ENCODE measurements at regions of chr9 and their contacts with region 1.

Region 1: DNA sequence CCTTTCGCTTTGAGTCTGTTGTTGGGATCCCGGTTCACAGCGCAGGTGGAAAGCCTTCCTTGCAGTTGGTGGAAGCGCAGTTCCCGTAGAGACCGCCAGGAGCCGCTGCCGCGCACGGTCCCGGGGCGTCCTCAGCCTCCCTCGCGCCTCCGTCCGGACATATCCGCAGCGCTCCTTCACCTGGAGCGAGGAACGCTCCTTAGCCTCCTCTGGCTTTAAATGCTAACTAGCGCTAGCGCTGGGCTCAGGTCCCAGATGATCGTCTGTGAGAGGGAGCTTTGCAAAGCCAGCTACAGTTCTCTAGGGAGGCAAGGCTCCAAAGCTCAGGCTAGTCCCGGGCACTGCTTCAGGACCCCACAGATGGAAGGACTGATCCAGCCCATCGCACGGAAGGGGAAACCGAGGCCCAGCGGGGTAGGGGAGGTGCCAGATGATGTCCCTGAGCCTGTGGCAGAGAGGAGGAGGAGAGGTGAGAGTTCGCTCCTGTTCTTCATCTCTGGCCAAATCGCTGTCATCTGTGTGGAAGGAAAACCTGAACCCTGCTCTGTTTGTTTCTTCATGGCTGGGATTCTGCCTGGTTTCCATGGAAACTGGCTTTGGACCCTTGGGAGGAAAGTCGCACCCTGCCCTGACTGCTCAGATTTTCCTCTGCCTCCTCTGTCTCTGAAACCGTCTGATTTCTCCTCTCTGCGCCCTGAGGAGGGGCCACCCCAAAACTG is 31.4 kb downstream of the COL15A1 start:
- DNase-seq: peak; percentile 86
- H3K4me3 Mint-ChIP-seq: no peak overlapping the region
- H3K27ac Mint-ChIP-seq: no peak overlapping the region
- H3K4me1 Mint-ChIP-seq: peaks cover 13% of the 10 kb centered on the region
- H3K27me3 Mint-ChIP-seq: peaks cover 66% of the 10 kb centered on the region

Region 2: DNA sequence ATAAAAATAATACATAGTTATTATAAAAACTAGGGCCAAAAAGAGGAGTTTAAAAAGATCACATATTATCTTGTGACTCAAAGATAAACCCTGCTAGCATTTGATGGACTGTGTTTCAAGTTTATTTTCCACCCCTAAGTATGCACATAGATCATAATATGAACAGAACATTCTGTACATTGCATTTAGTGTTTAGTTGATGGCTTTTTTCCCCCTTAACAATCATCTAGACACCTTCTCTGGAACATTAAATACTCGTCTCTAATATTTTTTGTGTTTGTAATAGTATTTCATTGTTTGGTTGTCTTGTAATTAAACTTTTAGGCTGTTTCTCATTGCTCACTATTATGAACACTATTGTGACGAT is 20.9 kb before region 1 on chr9:
- CTCF ChIA-PET with region 1: no interaction called
- DNase-seq: no peak
- H3K4me3 Mint-ChIP-seq: no peak overlapping the region
- H3K27ac Mint-ChIP-seq: no peak overlapping the region
- H3K4me1 Mint-ChIP-seq: no peaks in the 10 kb centered on the region
- H3K27me3 Mint-ChIP-seq: peaks cover 41% of the 10 kb centered on the region

Region 3: DNA sequence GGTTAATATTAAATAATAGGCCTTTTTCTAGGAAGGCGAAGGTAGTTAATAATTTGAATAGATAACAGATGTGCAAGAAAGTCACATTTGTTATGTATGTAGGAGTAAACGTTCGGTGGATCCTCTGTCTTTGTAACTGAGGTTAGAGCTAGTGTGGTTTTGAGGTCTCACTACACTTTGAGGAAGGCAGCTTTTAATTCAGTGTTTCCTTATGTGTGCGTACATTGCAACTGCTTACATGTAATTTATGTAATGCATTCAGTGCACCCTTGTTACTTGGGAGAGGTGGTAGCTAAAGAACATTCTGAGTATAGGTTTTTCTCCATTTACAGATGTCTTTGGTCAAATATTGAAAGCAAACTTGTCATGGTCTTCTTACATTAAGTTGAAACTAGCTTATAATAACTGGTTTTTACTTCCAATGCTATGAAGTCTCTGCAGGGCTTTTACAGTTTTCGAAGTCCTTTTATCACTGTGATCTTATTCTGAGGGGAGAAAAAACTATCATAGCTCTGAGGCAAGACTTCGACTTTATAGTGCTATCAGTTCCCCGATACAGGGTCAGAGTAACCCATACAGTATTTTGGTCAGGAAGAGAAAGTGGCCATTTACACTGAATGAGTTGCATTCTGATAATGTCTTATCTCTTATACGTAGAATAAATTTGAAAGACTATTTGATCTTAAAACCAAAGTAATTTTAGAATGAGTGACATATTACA is 175.5 kb after region 1 on chr9:
- CTCF ChIA-PET with region 1: interaction called, 13 read pairs
- DNase-seq: no peak
- H3K4me3 Mint-ChIP-seq: no peak overlapping the region
- H3K27ac Mint-ChIP-seq: peak overlapping the region; percentile 83
- H3K4me1 Mint-ChIP-seq: peaks cover 28% of the 10 kb centered on the region
- H3K27me3 Mint-ChIP-seq: peaks cover 8% of the 10 kb centered on the region